ENCODE measurements at regions of chr18 and their contacts with region 1.

Region 1: DNA sequence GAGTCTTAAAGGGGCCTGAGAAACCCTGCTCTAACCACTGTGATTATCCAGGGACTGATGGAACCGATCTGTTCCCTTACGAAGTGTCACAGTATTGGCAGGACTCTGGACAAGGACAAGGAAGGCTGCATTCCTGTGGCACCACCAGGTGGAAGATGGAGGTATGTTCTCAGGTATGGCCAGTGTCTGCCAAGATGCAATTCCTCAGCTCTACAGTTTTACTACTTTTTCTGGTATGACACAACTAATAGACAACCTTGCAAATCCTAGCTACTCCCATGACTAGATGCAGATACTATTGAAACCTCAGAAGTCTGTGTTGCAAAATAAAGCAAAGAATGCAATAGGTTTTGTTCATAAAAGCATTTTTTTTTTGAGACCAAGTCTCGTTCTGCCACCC is 14.6 kb downstream of the RAB31 start:
- DNase-seq: no peak
- H3K4me3 ChIP-seq: no peak overlapping the region
- H3K27ac ChIP-seq: no peak overlapping the region
- H3K4me1 ChIP-seq: peaks cover 4% of the 10 kb centered on the region
- H3K27me3 ChIP-seq: no peaks in the 10 kb centered on the region
- CTCF ChIP-seq: no peak
- EP300 ChIP-seq: no peak
- POLR2A ChIP-seq: no peak

Region 2: GRCh38 chr18:9535382-9535991 is 187.2 kb before region 1 on chr18:
- intact Hi-C with region 1: no loop called
- DNase-seq: peak; percentile 68 to 83 (median 77)
- H3K4me3 ChIP-seq: no peak overlapping the region
- H3K27ac ChIP-seq: peak overlapping the region; percentile 12 to 62
- H3K4me1 ChIP-seq: peaks cover 8% of the 10 kb centered on the region
- H3K27me3 ChIP-seq: no peaks in the 10 kb centered on the region
- CTCF ChIP-seq: no peak
- EP300 ChIP-seq: no peak
- POLR2A ChIP-seq: no peak

Region 3: DNA sequence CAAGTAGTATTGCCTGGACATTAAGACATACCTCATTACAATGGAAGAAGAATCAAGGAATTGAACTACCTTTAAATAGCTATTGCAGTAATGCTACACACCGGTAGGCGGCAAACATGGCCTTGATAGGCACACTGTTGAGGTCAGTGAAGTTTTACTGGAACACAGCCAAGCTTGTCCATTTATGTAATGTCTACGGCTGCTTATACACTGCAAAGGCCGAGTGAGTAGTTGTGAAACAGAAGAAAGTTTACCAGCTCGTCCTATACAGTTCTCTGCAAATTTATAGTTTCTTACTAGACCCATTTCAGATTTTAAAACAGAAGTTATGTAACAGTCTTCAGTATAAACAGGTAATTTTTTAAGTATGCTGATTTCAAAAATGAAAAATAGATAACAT is 147.1 kb before region 1 on chr18:
- intact Hi-C with region 1: no loop called
- DNase-seq: peak; percentile 50 to 81 (median 60)
- H3K4me3 ChIP-seq: no peak overlapping the region
- H3K27ac ChIP-seq: no peak overlapping the region
- H3K4me1 ChIP-seq: no peaks in the 10 kb centered on the region
- H3K27me3 ChIP-seq: no peaks in the 10 kb centered on the region
- CTCF ChIP-seq: peak; percentile 57 to 84 (median 70)
- EP300 ChIP-seq: no peak
- POLR2A ChIP-seq: no peak

Region 4: GRCh38 chr18:9755615-9756014 is 32.9 kb after region 1 on chr18:
- intact Hi-C with region 1: no loop called
- DNase-seq: no peak
- H3K4me3 ChIP-seq: no peak overlapping the region
- H3K27ac ChIP-seq: no peak overlapping the region
- H3K4me1 ChIP-seq: peaks cover 8% of the 10 kb centered on the region
- H3K27me3 ChIP-seq: no peaks in the 10 kb centered on the region
- CTCF ChIP-seq: no peak
- EP300 ChIP-seq: no peak
- POLR2A ChIP-seq: no peak

Region 5: GRCh38 chr18:9782073-9782857 is 59.6 kb after region 1 on chr18:
- intact Hi-C with region 1: loop called in 1 of 4 experiments (anchors 10 kb)
- DNase-seq: peak in 2 of 5 donors; percentile 36 to 48
- H3K4me3 ChIP-seq: no peak overlapping the region
- H3K27ac ChIP-seq: peak overlapping the region in 1 of 2 donors; percentile 20
- H3K4me1 ChIP-seq: peaks cover 10% of the 10 kb centered on the region
- H3K27me3 ChIP-seq: no peaks in the 10 kb centered on the region
- CTCF ChIP-seq: no peak
- EP300 ChIP-seq: no peak
- POLR2A ChIP-seq: no peak

Region 6: DNA sequence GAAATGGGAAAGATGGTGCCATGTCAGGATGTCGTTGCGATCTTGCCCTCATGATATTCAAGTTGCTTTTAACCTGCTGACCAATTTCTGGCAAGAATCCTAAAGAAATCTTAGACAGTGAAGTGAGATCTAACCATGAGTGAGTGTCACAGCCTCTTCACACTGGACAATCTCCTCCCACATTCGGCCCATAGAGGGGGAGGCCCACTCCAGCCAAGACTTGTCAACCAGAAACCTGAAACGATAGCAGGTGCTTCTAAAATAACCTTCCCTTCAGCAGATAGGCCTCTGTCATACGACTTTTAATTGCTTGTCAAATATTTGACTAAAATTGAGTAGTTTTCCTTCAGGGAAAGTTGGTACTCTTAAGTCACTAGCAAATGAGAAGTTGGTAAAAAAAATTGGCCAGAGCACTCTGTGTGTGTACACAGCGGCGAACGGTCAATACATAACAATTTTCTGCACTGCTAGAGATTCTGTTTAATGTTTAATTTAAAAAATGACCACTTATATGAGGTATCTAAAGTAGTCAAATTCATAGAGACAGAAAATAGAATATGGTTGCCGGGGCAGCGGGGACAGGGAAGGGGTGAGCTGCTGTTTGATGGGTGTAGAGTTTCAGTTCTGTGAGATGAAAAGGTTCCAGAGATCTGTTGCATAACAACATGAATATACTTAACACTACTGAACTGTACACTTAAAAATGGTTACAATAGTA is 301.3 kb after region 1 on chr18:
- intact Hi-C with region 1: no loop called
- DNase-seq: no peak
- H3K4me3 ChIP-seq: no peak overlapping the region
- H3K27ac ChIP-seq: no peak overlapping the region
- H3K4me1 ChIP-seq: no peaks in the 10 kb centered on the region
- H3K27me3 ChIP-seq: no peaks in the 10 kb centered on the region
- CTCF ChIP-seq: no peak
- EP300 ChIP-seq: no peak
- POLR2A ChIP-seq: no peak

Measured in ovary (tissue), 10 donors.